Gastrocnemius medialis (tissue), 4 donors: ENCODE measurements at regions of chr13 and their contacts with region 1.

Region 1: GRCh38 chr13:39451860-39452301 is 151.1 kb downstream of the LHFPL6 start:
- DNase-seq: peak; percentile 38 to 44
- ATAC-seq: peak; percentile 72 to 85
- H3K4me3 ChIP-seq: no peak overlapping the region
- H3K27ac ChIP-seq: peak overlapping the region; percentile 11 to 70 (median 56)
- H3K4me1 ChIP-seq: peaks cover 38 to 67% of the 10 kb centered on the region in 2 donors
- H3K27me3 ChIP-seq: no peaks in the 10 kb centered on the region
- CTCF ChIP-seq: no peak
- POLR2A ChIP-seq: no peak

Region 2: GRCh38 chr13:39401046-39401705 is 50.7 kb before region 1 on chr13:
- in situ Hi-C with region 1: no loop called
- intact Hi-C with region 1: loop called (anchors 2 kb)
- DNase-seq: no peak
- ATAC-seq: no peak
- H3K4me3 ChIP-seq: no peak overlapping the region
- H3K27ac ChIP-seq: no peak overlapping the region
- H3K4me1 ChIP-seq: peaks cover 0 to 11% of the 10 kb centered on the region in 2 donors
- H3K27me3 ChIP-seq: no peaks in the 10 kb centered on the region
- CTCF ChIP-seq: no peak
- POLR2A ChIP-seq: no peak

Region 3: GRCh38 chr13:39415008-39415802 is 36.7 kb before region 1 on chr13:
- in situ Hi-C with region 1: no loop called
- intact Hi-C with region 1: loop called (anchors 5 kb)
- DNase-seq: peak; percentile 12 to 21
- ATAC-seq: peak; percentile 79 to 82
- H3K4me3 ChIP-seq: peak overlapping the region in 1 of 4 donors; percentile 7
- H3K27ac ChIP-seq: peak overlapping the region; percentile 51 to 76 (median 70)
- H3K4me1 ChIP-seq: peaks cover 7 to 56% of the 10 kb centered on the region in 2 donors
- H3K27me3 ChIP-seq: no peaks in the 10 kb centered on the region
- CTCF ChIP-seq: peak in 2 of 5 experiments; percentile 27 to 37
- POLR2A ChIP-seq: no peak

Region 4: DNA sequence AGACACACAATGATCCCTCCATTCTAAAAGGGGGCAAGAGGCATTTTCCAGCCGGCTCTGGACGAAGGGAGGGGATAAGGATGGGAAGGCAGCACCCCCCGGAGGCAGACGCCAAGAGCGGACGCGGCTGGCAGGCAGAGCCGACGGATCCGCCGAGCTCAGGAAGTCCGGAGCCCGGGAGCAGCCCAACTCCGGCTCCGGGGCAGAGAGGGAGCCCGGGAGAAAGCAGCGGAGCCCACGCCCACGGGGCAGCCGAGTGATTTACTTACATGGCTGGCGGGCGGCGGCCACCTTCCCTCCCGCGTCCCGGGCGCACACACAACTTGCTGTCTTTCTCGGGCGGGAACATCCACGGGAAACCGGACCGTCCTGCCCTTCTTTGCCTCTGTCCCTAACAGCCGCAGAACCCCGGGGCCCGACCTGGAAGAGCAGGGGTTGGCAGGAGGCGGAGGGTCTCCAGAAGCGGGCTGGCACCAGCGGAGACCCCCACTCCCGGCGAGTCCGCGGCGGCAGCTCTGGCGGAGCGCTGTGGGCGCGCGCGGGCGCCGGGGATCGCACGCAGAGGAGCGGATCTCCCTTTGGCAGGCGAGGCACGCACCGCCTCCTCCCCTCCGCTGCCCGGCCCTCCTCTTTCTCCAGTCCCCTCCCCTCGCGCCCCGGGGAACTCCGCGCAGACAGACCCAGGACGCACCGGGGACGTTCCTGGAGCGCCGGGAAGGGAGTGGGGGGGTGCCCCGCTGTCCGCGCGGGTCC is 150.9 kb after region 1 on chr13 and contains the start of gene LHFPL6:
- in situ Hi-C with region 1: no loop called
- intact Hi-C with region 1: loop called (anchors 10 kb)
- DNase-seq: peak; percentile 56 to 57
- ATAC-seq: peak; percentile 85 to 88
- H3K4me3 ChIP-seq: peak within 1 kb of the TSS; percentile 61 to 83 (median 73)
- H3K27ac ChIP-seq: peak within 1 kb of the TSS; percentile 54 to 82 (median 80)
- H3K4me1 ChIP-seq: peaks cover 6 to 10% of the 10 kb centered on the region in 2 donors
- H3K27me3 ChIP-seq: peaks cover 0 to 4% (median 0%) of the 10 kb centered on the region in 3 donors
- CTCF ChIP-seq: peak in 2 of 5 experiments; percentile 20 to 22
- POLR2A ChIP-seq: peak; percentile 42 to 74
- total RNA-seq, gene LHFPL6: 12.7 to 26.3 (median 16.0) TPM

Region 5: GRCh38 chr13:40477623-40478608 is 1026.0 kb after region 1 on chr13:
- in situ Hi-C with region 1: no loop called
- intact Hi-C with region 1: loop called (anchors 10 kb)
- DNase-seq: peak; percentile 56 to 73
- ATAC-seq: peak; percentile 60 to 70
- H3K4me3 ChIP-seq: no peak overlapping the region
- H3K27ac ChIP-seq: peak overlapping the region; percentile 18 to 66 (median 52)
- H3K4me1 ChIP-seq: peaks cover 4 to 21% of the 10 kb centered on the region in 2 donors
- H3K27me3 ChIP-seq: no peaks in the 10 kb centered on the region
- CTCF ChIP-seq: no peak
- POLR2A ChIP-seq: no peak